ENCODE measurements at regions of chr3 and their contacts with region 1.

Region 1: GRCh38 chr3:10263646-10264363 is 15.5 kb downstream of the TATDN2 start:
- DNase-seq: no peak
- H3K4me3 ChIP-seq: no peak overlapping the region; the same call in 1 of the 2 replicates
- H3K27ac ChIP-seq: no peak overlapping the region
- H3K27me3 ChIP-seq: no peaks in the 10 kb centered on the region
- CTCF ChIP-seq: peak; percentile 60

Region 2: GRCh38 chr3:10253731-10254130 is 10.1 kb before region 1 on chr3:
- CTCF ChIA-PET with region 1: interaction called, 11 read pairs
- POLR2A ChIA-PET with region 1: interaction called, 3 read pairs
- DNase-seq: no peak
- H3K4me3 ChIP-seq: no peak overlapping the region
- H3K27ac ChIP-seq: no peak overlapping the region
- H3K27me3 ChIP-seq: no peaks in the 10 kb centered on the region
- CTCF ChIP-seq: no peak

Region 3: GRCh38 chr3:10286596-10287330 is 23.0 kb after region 1 on chr3:
- CTCF ChIA-PET with region 1: interaction called, 16 read pairs
- POLR2A ChIA-PET with region 1: no interaction called
- DNase-seq: peak; percentile 24
- H3K4me3 ChIP-seq: no peak overlapping the region
- H3K27ac ChIP-seq: no peak overlapping the region
- H3K27me3 ChIP-seq: no peaks in the 10 kb centered on the region
- CTCF ChIP-seq: peak; percentile 57

Region 4: GRCh38 chr3:10804183-10804648 is 540.4 kb after region 1 on chr3:
- CTCF ChIA-PET with region 1: no interaction called
- POLR2A ChIA-PET with region 1: no interaction called
- DNase-seq: no peak
- H3K4me3 ChIP-seq: no peak overlapping the region
- H3K27ac ChIP-seq: no peak overlapping the region
- H3K27me3 ChIP-seq: no peaks in the 10 kb centered on the region
- CTCF ChIP-seq: no peak

Measured in AG04450 (cell line).